B cell (primary cell): ENCODE measurements at regions of chr4 and their contacts with region 1.

Region 1: GRCh38 chr4:78704981-78705683 is 71.0 kb upstream of the BMP2K start:
- DNase-seq: no peak
- ATAC-seq: no peak
- H3K4me3 ChIP-seq: no peak overlapping the region
- H3K4me3 Mint-ChIP-seq: no peak overlapping the region
- H3K27ac ChIP-seq: peak overlapping the region in 1 of 2 donors; percentile 21
- H3K27ac Mint-ChIP-seq: peak overlapping the region; percentile 72
- H3K4me1 ChIP-seq: peaks cover 22 to 34% of the 10 kb centered on the region in 2 donors
- H3K4me1 Mint-ChIP-seq: peaks cover 46% of the 10 kb centered on the region
- H3K27me3 ChIP-seq: no peaks in the 10 kb centered on the region
- H3K27me3 Mint-ChIP-seq: no peaks in the 10 kb centered on the region
- CTCF ChIP-seq: no peak

Region 2: DNA sequence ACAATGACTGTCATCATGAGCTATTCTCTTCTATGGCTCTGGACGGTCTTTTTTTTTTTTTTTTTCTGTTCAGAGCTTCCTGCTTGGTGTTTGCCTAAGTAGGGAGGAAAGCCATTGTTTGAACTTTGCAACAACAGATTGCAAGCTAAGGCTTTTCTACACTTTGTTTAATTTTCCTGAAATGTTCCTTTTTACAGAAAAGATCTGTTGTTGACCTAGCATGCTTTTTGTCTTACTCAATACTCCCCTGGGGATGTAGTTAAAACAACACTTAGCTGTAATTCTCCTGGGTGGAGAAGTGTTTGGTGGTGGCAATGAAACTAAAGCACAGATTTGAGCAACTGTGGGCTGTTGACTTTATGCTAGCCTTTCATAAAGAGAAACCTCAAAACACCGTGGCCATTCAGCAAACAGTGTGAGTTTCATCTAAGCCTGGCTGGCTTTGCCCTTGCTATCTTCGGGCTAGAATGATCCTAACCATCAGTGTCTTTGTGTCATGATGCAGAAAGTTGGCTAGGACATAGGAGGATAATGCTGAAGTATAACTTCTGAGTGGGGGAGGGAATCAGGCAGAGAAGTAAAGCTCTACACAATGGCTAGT is 43.1 kb before region 1 on chr4:
- CTCF ChIA-PET with region 1: interaction called, 4 read pairs
- POLR2A ChIA-PET with region 1: no interaction called
- intact Hi-C with region 1: loop called (anchors 5 kb)
- DNase-seq: peak; percentile 34
- ATAC-seq: peak; percentile 63
- H3K4me3 ChIP-seq: peak overlapping the region in 3 of 5 experiments; percentile 5 to 35 (median 12)
- H3K4me3 Mint-ChIP-seq: peak overlapping the region; percentile 75
- H3K27ac ChIP-seq: peak overlapping the region; percentile 16 to 67
- H3K27ac Mint-ChIP-seq: peak overlapping the region; percentile 89
- H3K4me1 ChIP-seq: peaks cover 56 to 61% of the 10 kb centered on the region in 2 donors
- H3K4me1 Mint-ChIP-seq: peaks cover 76% of the 10 kb centered on the region
- H3K27me3 ChIP-seq: no peaks in the 10 kb centered on the region
- H3K27me3 Mint-ChIP-seq: no peaks in the 10 kb centered on the region
- CTCF ChIP-seq: no peak